Right ventricle myocardium inferior (tissue), 1 donor: ENCODE measurements at regions of chr1 and their contacts with region 1.

Region 1: DNA sequence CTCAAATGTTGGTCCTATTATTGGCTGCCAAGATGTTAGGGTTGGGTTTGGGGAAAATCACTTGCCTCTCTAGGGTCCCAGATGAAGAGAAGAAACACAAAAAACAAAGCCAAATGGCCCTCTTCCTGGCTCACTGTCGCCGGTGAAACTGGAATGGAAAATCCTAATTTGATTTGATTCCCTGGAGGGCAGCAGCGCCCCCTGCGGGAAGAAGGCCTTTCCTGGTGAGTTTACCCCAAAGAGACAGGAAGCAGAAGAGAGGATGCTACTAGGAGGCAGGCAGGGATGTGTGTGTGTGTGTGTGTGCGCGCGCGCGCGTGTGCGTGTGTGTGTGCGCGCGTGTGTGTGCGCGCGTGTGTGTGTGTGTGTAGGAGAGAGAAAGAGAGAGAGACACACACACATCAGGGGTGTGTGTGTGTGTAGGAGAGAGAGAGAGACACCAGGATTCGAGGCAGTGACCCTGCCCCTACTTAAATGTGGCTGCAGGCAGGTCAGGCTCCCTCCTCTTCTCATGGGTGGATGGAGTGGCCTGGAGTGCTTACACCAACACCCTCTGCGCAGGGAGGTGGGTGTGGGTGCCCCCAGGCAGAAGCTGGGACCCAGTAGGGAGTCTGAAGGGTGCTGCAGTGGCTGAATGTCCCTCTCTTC is 3.1 kb upstream of the SELENON start:
- DNase-seq: peak; percentile 86
- ATAC-seq: peak; percentile 23

Region 2: DNA sequence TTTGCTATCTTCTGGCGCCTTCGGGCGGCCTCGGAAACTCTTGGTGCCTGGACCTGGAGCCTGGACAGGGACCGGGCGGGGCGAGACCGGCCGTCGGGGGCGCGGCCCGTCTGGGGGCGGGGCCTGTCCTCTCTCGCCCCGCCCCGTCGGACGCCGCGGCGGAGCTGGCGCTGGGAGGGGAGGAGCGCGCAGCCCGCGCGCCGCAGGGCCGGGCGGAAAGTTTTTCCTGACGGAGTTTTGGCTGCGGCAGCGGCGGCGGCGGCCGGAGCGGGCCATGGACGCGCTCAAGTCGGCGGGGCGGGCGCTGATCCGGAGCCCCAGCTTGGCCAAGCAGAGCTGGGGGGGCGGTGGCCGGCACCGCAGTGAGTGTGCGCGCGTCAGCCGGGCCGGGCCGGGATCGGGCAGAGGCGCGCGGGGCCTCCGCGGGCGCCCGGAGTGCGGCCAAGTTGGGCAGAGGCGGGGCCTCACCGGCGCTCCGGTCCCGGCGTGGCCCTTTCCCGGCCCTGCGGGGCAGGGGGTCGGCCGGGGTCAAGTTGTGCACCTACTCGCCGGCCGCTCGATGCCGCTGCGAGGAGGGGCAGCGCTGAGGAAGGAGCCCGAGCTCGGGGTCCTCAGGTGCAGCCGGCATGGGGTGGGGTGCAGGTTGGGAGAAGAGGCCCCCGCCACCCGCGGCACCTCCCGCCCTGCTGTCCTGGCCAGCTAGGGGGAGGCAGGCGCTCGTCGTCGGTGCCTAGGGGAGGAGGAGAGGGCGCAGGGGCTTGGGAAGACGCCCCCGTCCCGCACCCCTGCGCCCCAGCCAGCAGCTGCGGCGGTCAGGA is 253.3 kb before region 1 on chr1 and contains the start of gene LDLRAP1:
- intact Hi-C with region 1: loop called (anchors 5 kb)
- DNase-seq: peak; percentile 91
- ATAC-seq: peak; percentile 97
- total RNA-seq, gene LDLRAP1: 12.3 TPM

Region 3: DNA sequence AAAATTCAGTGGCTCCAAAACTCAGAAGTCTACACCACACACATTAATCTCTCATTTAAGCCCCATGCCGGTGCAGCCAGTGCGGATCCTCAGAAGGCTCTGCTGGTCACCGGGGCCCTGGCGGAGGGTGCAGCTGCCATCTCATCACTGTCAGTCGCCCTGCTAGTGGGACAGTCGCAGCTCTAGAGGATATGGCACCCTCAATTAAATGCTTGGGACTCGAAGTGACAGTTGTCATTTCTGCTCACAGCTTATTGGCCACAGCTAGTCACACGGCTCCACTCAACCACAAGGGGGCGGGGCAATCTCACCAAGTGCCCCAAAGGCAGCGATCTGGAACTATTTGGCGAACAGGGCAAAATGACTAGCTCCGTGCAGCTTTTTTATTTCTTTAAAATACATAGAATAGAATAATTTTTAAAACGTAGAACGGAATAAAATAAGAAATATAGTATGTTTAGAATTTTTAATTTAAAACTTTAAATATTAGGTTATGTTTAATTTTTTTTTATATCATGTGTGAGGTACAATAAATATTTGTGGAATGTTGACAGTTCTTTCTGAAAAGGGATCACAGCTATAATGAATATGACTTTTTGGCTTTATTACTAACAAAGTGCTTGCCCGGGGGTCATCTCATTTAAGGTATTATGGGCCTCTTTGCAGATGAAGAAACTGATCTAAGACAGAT is 188.3 kb before region 1 on chr1:
- intact Hi-C with region 1: loop called (anchors 1 kb)
- DNase-seq: peak; percentile 94
- ATAC-seq: peak; percentile 88

Region 4: GRCh38 chr1:25642574-25643108 is 154.3 kb before region 1 on chr1:
- intact Hi-C with region 1: no loop called
- DNase-seq: no peak
- ATAC-seq: no peak

Region 5: GRCh38 chr1:25743826-25744581 is 52.9 kb before region 1 on chr1:
- intact Hi-C with region 1: loop called (anchors 2 kb)
- DNase-seq: peak; percentile 79
- ATAC-seq: peak; percentile 87

Region 6: GRCh38 chr1:25837262-25837875 is 40.4 kb after region 1 on chr1:
- intact Hi-C with region 1: no loop called
- DNase-seq: no peak
- ATAC-seq: no peak

Region 7: DNA sequence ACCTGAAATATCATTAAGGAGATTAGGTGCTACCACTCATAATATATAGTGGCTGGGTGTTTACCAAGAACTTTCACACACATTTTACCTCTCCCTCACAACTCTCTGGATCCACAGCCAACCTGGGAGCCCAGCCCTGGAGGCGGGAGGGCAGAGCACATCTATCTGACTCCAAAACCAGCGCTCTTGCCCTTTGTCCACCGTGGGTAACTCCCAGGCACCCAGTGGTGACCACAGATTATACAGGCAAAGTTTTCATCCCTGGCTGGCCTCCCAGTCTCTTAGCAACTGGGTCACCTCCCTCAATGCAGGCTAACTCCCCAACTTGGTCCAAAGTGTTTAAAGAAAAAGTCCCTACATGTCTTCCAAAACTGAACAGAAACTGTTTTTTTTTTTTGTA is 76.2 kb after region 1 on chr1:
- intact Hi-C with region 1: no loop called
- DNase-seq: no peak
- ATAC-seq: no peak